Body of pancreas (tissue), 4 donors: ENCODE measurements at regions of chr1 and their contacts with region 1.

Region 1: GRCh38 chr1:224914292-224914900 is 15.1 kb upstream of the DNAH14 start:
- DNase-seq: no peak
- ATAC-seq: no peak
- H3K4me3 ChIP-seq: no peak overlapping the region
- H3K27ac ChIP-seq: no peak overlapping the region
- H3K4me1 ChIP-seq: no peaks in the 10 kb centered on the region
- H3K27me3 ChIP-seq: no peaks in the 10 kb centered on the region
- CTCF ChIP-seq: no peak
- POLR2A ChIP-seq: no peak

Region 2: GRCh38 chr1:224644553-224645154 is 269.7 kb before region 1 on chr1:
- intact Hi-C with region 1: loop called (anchors 10 kb)
- DNase-seq: peak; percentile 46 to 62 (median 54)
- ATAC-seq: peak; percentile 45
- H3K4me3 ChIP-seq: no peak overlapping the region
- H3K27ac ChIP-seq: no peak overlapping the region
- H3K4me1 ChIP-seq: peaks cover 32% of the 10 kb centered on the region
- H3K27me3 ChIP-seq: no peaks in the 10 kb centered on the region
- CTCF ChIP-seq: peak; percentile 56 to 95 (median 81)
- POLR2A ChIP-seq: no peak

Region 3: DNA sequence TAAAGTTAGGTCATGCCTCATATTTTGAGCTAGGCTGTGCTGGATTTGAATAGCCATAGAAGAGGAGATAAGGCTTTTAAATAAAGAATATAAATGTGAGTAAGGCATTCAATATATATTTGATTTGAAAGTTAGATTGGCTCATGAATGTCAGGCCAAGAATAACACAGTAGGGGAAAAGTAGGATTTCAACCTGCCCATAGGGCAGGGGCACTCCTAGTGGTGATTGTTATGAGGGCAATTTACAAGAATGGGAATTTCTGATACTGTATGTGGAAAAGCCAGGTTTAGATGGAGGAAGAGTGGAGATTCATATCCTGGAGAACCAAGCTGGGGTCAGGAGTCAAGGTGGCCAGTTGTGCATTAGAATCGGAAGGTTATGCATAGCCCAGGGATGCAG is 90.0 kb after region 1 on chr1:
- intact Hi-C with region 1: no loop called
- DNase-seq: no peak
- ATAC-seq: no peak
- H3K4me3 ChIP-seq: no peak overlapping the region
- H3K27ac ChIP-seq: no peak overlapping the region
- H3K4me1 ChIP-seq: no peaks in the 10 kb centered on the region
- H3K27me3 ChIP-seq: no peaks in the 10 kb centered on the region
- CTCF ChIP-seq: no peak
- POLR2A ChIP-seq: no peak